ENCODE measurements at regions of chr14 and their contacts with region 1.

Region 1: GRCh38 chr14:50619556-50620141 is 48.5 kb downstream of the SAV1 start:
- DNase-seq: no peak
- H3K4me3 Mint-ChIP-seq: no peak overlapping the region
- H3K27ac Mint-ChIP-seq: no peak overlapping the region
- H3K4me1 Mint-ChIP-seq: no peaks in the 10 kb centered on the region
- H3K27me3 Mint-ChIP-seq: no peaks in the 10 kb centered on the region

Region 2: DNA sequence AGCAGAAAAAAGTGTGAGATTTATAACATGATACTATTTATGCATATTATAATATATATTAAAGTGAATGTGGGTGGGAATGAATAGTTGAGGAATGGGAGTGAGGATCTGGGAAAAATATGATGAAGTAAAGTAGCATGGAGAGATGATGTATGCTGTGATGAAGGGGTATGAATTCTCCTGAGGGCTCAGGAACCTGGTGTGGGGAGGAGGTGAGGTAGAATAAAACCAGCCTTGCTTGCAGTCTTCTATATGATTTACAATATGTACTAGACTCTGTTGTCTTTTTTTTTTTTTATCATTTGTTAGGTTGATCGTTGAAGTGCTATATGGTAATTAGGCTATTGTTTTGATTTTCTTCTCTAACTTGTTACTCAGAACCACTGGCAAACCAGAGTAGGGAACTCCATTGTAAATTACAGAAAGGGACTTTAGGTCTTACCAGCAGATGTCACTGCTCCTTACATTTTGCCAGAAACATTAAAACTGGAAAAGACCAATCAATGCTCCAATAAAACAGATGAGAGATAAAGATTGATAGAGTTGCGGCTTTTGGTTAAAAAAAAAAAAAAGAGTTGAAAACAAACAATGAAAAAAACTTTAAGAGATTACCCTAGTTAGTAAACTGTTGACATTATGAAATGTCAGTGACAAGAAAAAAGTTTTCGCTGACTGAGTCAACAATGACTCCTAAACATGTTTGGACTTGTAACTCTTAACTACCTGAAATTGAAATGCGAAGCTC is 19.8 kb before region 1 on chr14:
- CTCF ChIA-PET with region 1: interaction called, 11 read pairs
- intact Hi-C with region 1: no loop called
- DNase-seq: no peak
- H3K4me3 Mint-ChIP-seq: no peak overlapping the region
- H3K27ac Mint-ChIP-seq: no peak overlapping the region
- H3K4me1 Mint-ChIP-seq: no peaks in the 10 kb centered on the region
- H3K27me3 Mint-ChIP-seq: no peaks in the 10 kb centered on the region

Region 3: DNA sequence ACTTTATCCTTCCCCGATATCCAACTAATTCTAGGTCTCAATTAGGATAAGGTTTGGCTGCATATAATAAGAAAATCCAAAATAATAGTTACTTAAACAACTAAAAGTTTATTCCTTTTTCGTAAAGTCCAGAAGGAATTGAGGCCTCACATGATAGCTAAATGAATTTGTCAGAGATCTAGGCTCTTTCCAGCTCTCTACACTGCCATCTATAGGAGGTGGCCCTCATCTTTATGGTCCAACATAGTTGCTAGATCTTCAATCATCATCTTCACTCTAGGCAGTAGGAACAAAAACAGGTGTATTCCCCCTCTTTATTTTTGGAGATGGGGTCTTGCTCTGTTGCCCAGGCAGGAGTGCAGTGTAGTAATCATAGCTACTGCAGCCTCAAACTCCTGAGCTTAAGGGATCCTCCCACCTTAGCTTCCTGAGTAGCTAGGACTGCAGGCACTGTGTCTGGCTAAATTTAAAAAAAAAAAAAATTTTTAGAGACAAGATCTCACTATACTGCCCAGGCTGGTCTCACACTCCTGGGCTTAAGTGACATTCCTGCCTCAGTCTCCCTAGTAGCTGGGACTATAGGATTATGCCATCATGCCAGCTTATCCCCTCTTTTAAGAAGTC is 94.9 kb after region 1 on chr14:
- CTCF ChIA-PET with region 1: interaction called, 7 read pairs
- intact Hi-C with region 1: loop called (anchors 2 kb)
- DNase-seq: peak; percentile 30
- H3K4me3 Mint-ChIP-seq: no peak overlapping the region
- H3K27ac Mint-ChIP-seq: no peak overlapping the region
- H3K4me1 Mint-ChIP-seq: no peaks in the 10 kb centered on the region
- H3K27me3 Mint-ChIP-seq: peaks cover 3% of the 10 kb centered on the region

Measured in activated naive CD4-positive, alpha-beta T cell treated with anti-CD3 and anti-CD28 coated beads for 36 hours (primary cell).